Heart left ventricle (tissue), 16 donors: ENCODE measurements at regions of chr3 and their contacts with region 1.

Region 1: DNA sequence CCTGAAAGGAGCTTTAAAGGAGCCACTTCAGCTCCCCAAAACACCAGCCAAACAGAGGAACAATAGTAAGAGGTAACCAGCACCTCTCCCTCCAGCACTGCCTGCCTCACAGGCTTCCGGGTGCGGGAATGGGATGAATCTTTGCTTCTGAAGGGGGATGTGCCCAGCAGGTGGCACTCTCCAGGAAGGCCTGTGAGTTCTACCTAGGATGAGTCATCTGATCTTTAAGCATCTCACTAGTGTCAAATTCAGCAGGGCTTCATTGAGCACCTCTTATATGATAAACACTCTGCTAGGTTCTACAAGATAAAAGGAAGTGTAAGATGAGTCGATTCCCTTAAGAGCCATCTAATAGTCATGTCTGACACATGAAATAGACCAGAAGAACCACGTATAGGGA is 237.4 kb upstream of the UMPS start:
- DNase-seq: peak in 3 of 5 donors; percentile 22 to 51 (median 43)
- ATAC-seq: peak; percentile 44 to 72 (median 60)
- H3K4me3 ChIP-seq: no peak overlapping the region
- H3K27ac ChIP-seq: no peak overlapping the region
- H3K4me1 ChIP-seq: peaks cover 0 to 5% (median 0%) of the 10 kb centered on the region in 12 donors
- H3K27me3 ChIP-seq: no peaks in the 10 kb centered on the region
- CTCF ChIP-seq: peak in 9 of 12 donors; percentile 24 to 54 (median 43)
- POLR2A ChIP-seq: no peak

Region 2: GRCh38 chr3:124097362-124098131 is 395.3 kb before region 1 on chr3:
- intact Hi-C with region 1: no loop called
- DNase-seq: no peak
- ATAC-seq: peak in 3 of 4 donors; percentile 33 to 58 (median 33)
- H3K4me3 ChIP-seq: no peak overlapping the region
- H3K27ac ChIP-seq: peak overlapping the region in 1 of 12 donors; percentile 5
- H3K4me1 ChIP-seq: peaks cover 0 to 18% (median 6%) of the 10 kb centered on the region in 12 donors
- H3K27me3 ChIP-seq: no peaks in the 10 kb centered on the region
- CTCF ChIP-seq: no peak
- POLR2A ChIP-seq: no peak

Region 3: DNA sequence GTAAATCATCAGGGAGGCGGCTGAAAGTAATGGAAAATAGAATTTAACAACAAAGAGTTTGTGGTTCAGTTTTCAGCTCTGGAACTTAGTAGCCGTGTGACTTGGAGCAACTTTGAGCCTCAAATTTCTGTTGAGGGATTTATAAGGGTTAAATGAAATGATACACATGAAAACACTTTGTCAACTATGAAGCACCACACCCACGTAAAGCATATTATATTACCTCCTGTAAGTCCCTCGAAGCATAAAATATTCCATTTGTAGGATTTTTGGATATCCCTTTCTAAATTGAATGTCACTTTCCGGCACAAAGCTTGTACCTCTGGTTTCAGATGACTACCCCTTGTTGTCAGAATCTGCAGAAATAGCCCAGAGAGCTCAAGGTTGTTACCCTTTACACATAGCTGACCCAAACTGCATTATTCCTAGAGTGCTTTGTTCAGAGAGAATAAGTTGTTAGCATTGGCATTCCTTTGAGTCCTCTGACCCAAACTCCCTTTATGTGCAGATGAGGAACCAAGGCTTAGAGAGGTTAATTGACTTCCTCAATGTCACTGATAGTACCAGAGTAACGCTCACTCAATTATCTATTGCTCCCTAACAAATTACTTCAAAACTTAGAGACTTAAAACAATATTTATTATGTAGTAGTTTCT is 49.5 kb after region 1 on chr3:
- intact Hi-C with region 1: loop called in 1 of 10 experiments (anchors 5 kb)
- DNase-seq: no peak
- ATAC-seq: no peak
- H3K4me3 ChIP-seq: no peak overlapping the region
- H3K27ac ChIP-seq: no peak overlapping the region
- H3K4me1 ChIP-seq: peaks cover 0 to 9% (median 0%) of the 10 kb centered on the region in 12 donors
- H3K27me3 ChIP-seq: no peaks in the 10 kb centered on the region
- CTCF ChIP-seq: no peak
- POLR2A ChIP-seq: no peak

Region 4: GRCh38 chr3:124552239-124552638 is 59.4 kb after region 1 on chr3:
- intact Hi-C with region 1: loop called in 9 of 10 experiments (anchors 2 to 5 kb)
- DNase-seq: no peak
- ATAC-seq: peak in 3 of 4 donors; percentile 7 to 60 (median 13)
- H3K4me3 ChIP-seq: no peak overlapping the region
- H3K27ac ChIP-seq: no peak overlapping the region
- H3K4me1 ChIP-seq: peaks cover 0 to 25% (median 6%) of the 10 kb centered on the region in 12 donors
- H3K27me3 ChIP-seq: no peaks in the 10 kb centered on the region
- CTCF ChIP-seq: no peak
- POLR2A ChIP-seq: no peak

Region 5: DNA sequence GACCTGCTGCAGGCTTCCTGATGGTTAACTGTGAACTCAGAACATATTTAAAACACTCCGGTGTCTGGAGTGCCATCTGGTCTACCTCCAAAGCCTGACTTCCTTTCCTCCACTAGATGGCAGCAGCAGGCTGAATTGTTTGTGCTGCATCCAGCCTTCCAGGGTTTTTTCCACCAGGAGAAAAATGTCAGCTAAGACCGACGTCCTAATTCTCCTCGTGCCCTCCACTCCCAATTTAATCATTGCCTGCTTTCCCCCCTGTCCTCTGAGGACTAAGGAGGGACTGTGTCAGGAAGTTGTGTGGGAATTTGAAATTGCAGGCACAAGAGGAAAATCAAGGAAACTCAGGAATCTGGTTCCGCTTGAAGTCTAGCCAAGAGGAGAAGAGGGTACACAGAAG is 72.2 kb after region 1 on chr3:
- intact Hi-C with region 1: no loop called
- DNase-seq: peak in 4 of 5 donors; percentile 66 to 79 (median 74)
- ATAC-seq: peak; percentile 42 to 64 (median 61)
- H3K4me3 ChIP-seq: no peak overlapping the region
- H3K27ac ChIP-seq: peak overlapping the region in 1 of 12 donors; percentile 41
- H3K4me1 ChIP-seq: peaks cover 0 to 21% (median 10%) of the 10 kb centered on the region in 12 donors
- H3K27me3 ChIP-seq: no peaks in the 10 kb centered on the region
- CTCF ChIP-seq: peak; percentile 87 to 98 (median 90)
- POLR2A ChIP-seq: no peak